ENCODE measurements at regions of chr6 and their contacts with region 1.

Region 1: DNA sequence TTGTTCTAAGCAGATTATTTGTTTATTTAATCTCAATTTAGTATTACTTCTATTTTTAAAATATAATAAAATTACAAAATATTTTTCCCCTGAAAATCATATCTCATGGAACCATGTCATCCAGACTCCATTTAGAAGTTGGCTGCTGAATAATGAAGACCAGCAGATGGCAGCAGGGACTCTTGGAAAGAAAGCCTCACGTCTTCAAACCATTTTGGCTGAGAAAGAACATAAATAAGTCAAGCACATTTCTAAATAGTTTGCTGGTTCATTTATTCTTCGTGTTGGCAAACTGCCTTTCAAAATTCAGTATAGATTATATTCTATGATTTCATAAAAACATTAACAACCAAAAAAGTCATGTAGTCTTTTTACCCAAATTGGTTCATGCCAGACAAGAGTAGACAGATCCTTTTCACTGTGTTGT is 71.7 kb downstream of the RCAN2 start:
- DNase-seq: no peak

Region 2: DNA sequence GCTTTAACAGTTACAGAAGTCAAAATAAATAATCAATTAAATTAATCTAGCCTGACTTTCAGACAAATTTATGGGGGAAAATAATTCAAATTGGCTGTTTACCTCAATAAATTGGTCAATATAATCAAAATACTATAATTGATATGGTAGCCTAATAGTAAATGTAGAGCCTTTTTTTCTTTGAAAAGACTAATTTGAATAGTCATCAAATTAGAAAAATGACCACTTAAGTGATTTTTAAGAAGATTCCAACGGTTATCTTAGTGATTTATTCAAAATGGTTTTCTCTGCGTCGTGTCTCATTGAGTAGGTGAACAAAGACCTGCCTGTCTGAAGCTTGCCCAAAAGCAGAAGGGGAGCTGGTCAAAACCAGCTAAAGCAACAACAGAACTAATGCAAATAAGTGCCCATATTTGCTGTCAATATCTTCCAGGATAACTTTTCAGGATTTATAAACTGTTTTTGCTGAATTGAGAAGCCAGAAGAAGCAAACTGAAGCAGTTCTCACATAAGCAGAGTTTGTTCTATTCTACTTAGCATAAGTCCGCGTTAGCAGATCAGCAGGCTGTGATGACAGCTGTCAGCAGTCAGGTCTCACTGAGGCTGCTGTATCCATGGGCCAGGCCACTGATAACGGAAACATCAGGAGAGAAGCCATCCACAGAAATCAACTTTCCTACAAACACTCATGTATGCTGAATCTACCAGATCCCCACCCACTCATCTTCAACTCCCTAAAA is 64.7 kb after region 1 on chr6:
- intact Hi-C with region 1: loop called in 1 of 2 experiments (anchors 10 kb)
- DNase-seq: no peak

Region 3: GRCh38 chr6:46491628-46492547 is 72.3 kb after region 1 on chr6:
- intact Hi-C with region 1: loop called (anchors 2 to 10 kb)
- DNase-seq: peak; percentile 84

Region 4: GRCh38 chr6:46626228-46626909 is 206.8 kb after region 1 on chr6:
- intact Hi-C with region 1: loop called (anchors 5 to 10 kb)
- DNase-seq: no peak